Caco-2 (cell line): ENCODE measurements at regions of chr15 and their contacts with region 1.

Region 1: DNA sequence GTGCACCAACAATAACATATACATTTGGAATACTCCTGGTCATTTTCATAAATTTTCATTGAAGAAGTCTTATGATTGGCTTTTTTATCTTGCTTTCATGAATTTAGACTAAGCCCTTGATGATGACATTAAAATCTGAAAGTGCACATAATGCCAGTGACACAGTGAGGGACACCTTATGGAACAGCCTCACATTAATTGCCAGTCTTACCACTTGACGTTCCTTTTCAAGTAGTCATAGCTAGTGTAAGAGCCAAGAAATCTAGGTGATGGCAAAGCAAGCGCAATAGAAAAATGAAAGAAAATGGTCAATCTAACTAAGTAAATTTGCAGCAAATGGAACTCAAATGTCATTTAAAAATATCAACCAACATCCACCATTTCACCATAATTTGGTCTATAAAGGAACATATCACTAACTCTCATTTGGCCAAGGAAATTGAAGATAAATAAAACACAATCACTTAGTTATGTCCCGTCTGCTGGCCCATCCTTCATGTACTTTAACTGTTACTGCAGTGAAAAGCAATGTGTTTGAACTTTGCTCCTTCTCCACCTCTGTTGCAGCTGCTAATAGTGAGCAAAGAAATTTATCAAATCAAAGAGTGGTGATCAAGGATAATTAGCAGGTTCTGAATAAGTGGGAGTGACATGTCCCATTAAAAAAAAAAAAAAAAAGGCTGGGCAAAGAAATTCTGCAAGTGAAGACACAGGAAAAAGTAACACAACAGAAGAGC is 110.0 kb downstream of the TJP1 start:
- DNase-seq: no peak
- H3K4me3 ChIP-seq: no peak overlapping the region
- H3K4me3 Mint-ChIP-seq: no peak overlapping the region
- H3K27ac Mint-ChIP-seq: peak overlapping the region; percentile 55
- H3K4me1 ChIP-seq: no peaks in the 10 kb centered on the region
- H3K4me1 Mint-ChIP-seq: peaks cover 8% of the 10 kb centered on the region
- H3K27me3 ChIP-seq: no peaks in the 10 kb centered on the region
- H3K27me3 Mint-ChIP-seq: no peaks in the 10 kb centered on the region
- CTCF ChIP-seq: no peak

Region 2: DNA sequence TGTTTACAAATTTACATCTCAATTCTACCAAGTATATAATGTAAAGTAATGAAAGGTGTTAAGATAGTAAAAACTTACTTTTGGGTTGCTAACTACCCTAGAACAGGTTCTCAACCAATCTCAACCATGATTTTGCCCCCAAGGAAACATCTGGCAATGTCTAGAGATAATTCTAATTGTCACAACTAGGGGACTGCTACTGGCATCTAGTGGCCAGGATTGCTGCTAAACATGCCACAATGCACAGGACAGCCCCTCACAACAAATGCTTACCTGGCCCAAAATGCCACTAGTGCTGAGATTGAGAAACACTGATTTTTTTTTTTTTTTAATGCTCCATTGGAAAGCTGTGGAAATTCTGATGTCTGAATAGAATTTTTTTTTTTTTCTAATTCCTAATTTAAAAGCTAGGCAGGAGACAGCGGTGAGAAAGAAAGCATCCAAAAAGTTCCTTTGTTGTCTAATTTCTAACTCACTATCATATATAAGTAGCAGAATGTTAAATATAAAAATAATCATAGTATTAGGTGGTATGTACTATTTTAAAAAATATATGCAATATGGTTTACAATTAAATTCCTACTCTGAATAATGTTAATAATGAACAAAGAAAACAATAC is 28.5 kb after region 1 on chr15:
- CTCF ChIA-PET with region 1: interaction called, 3 read pairs
- POLR2A ChIA-PET with region 1: no interaction called
- intact Hi-C with region 1: loop called (anchors 2 kb)
- DNase-seq: peak; percentile 42 to 44
- H3K4me3 ChIP-seq: no peak overlapping the region
- H3K4me3 Mint-ChIP-seq: no peak overlapping the region
- H3K27ac Mint-ChIP-seq: no peak overlapping the region
- H3K4me1 ChIP-seq: peaks cover 30% of the 10 kb centered on the region
- H3K4me1 Mint-ChIP-seq: peaks cover 23% of the 10 kb centered on the region
- H3K27me3 ChIP-seq: no peaks in the 10 kb centered on the region
- H3K27me3 Mint-ChIP-seq: no peaks in the 10 kb centered on the region
- CTCF ChIP-seq: peak in 1 of 2 experiments; percentile 60